Endothelial cell of umbilical vein (primary cell): ENCODE measurements at regions of chr19 and their contacts with region 1.

Region 1: GRCh38 chr19:15869109-15869555 is 28.7 kb downstream of the CYP4F2 start:
- DNase-seq: peak; percentile 24
- H3K4me3 ChIP-seq: no peak overlapping the region
- H3K27ac ChIP-seq: no peak overlapping the region
- H3K4me1 ChIP-seq: no peaks in the 10 kb centered on the region
- H3K27me3 ChIP-seq: no peaks in the 10 kb centered on the region
- CTCF ChIP-seq: peak; percentile 32 to 64
- POLR2A ChIP-seq: no peak

Region 2: DNA sequence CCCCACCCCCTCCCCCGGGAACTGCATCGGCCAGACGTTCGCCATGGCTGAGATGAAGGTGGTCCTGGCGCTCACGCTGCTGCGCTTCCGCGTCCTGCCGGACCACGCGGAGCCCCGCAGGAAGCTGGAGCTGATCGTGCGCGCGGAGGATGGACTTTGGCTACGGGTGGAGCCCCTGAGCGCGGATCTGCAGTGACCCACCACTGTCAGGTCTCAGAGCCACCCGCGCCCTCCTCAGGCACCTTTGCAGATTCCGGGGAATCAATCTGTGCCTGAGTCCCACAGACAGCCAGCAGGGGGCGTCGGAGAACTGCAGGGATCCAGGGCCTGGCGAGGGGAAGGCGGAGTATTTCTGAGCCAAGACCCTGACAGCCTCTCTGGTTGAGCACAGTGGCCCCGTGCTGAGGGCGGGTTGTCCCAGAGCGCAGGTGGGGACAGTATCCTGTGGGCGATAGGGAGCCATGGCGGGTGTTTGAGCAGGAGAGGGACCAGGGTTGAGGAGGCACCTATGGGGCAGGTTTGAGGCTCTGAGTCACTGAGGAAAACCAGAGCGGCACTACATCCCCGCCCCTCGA is 284.5 kb before region 1 on chr19:
- CTCF ChIA-PET with region 1: no interaction called
- POLR2A ChIA-PET with region 1: no interaction called
- dilution Hi-C with region 1: no loop called
- intact Hi-C with region 1: loop called (anchors 1 kb)
- DNase-seq: peak; percentile 58
- H3K4me3 ChIP-seq: no peak overlapping the region
- H3K27ac ChIP-seq: no peak overlapping the region
- H3K4me1 ChIP-seq: no peaks in the 10 kb centered on the region
- H3K27me3 ChIP-seq: no peaks in the 10 kb centered on the region
- CTCF ChIP-seq: peak; percentile 86 to 91
- POLR2A ChIP-seq: no peak

Region 3: GRCh38 chr19:15629003-15629880 is 239.9 kb before region 1 on chr19:
- CTCF ChIA-PET with region 1: no interaction called
- POLR2A ChIA-PET with region 1: no interaction called
- dilution Hi-C with region 1: no loop called
- intact Hi-C with region 1: loop called (anchors 1 kb)
- DNase-seq: peak; percentile 40
- H3K4me3 ChIP-seq: no peak overlapping the region
- H3K27ac ChIP-seq: no peak overlapping the region
- H3K4me1 ChIP-seq: no peaks in the 10 kb centered on the region
- H3K27me3 ChIP-seq: no peaks in the 10 kb centered on the region
- CTCF ChIP-seq: peak; percentile 83
- POLR2A ChIP-seq: no peak

Region 4: GRCh38 chr19:15944401-15944800 is 75.3 kb after region 1 on chr19:
- CTCF ChIA-PET with region 1: no interaction called
- POLR2A ChIA-PET with region 1: no interaction called
- dilution Hi-C with region 1: no loop called
- intact Hi-C with region 1: no loop called
- DNase-seq: no peak
- H3K4me3 ChIP-seq: no peak overlapping the region
- H3K27ac ChIP-seq: no peak overlapping the region
- H3K4me1 ChIP-seq: no peaks in the 10 kb centered on the region
- H3K27me3 ChIP-seq: no peaks in the 10 kb centered on the region
- CTCF ChIP-seq: no peak
- POLR2A ChIP-seq: no peak